Activated naive CD4-positive, alpha-beta T cell treated with anti-CD3 and anti-CD28 coated beads for 36 hours (primary cell): ENCODE measurements at regions of chr20 and their contacts with region 1.

Region 1: DNA sequence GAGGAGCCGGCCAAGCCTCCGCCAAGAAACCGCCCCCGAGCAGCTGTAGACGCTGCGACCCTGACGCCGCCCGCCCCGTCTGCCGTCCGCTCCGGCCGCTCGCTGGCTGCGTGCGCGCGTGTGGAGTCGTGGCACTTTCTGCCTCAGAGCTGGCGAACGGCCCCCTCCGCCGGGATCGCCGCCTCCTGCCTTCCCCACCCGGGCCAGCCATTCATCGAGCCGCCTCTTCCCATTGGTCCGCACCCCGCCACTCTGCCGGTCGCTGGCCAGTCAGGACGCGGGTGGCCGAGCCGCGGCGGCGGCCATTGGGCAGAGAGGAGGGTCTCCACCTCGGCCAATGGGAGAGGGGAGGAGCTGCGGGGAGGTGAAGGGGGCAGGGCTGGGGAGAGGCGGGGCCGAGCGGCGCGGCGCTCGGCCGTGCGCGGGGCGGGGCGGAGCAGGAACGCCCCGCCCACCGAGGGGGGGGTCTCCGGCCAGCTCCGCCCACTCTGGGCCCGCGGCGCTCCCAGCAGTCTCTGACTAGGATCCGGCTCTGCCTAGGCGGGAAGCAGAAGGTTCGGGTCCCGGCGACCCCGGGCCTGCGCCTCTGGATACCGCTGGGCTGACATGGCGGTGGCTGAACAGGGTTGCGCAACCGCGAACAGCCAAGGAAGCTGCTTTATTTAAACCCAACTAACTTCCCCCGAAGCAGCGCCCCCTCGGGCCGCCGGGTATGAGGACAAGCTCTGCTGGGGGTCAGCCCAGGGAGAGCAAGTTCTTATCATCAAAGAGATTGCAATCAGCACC is at the start of gene RRBP1:
- DNase-seq: peak; percentile 97
- H3K4me3 Mint-ChIP-seq: peak within 1 kb of the TSS; percentile 81
- H3K27ac Mint-ChIP-seq: peak within 1 kb of the TSS; percentile 47
- H3K4me1 Mint-ChIP-seq: peaks cover 15% of the 10 kb centered on the region
- H3K27me3 Mint-ChIP-seq: peaks cover 19% of the 10 kb centered on the region
- total RNA-seq, gene RRBP1: 19.6 to 20.0 TPM

Region 2: GRCh38 chr20:16729565-16730456 is 952.5 kb before region 1 on chr20 and contains the start of gene SNRPB2:
- CTCF ChIA-PET with region 1: no interaction called
- intact Hi-C with region 1: loop called (anchors 5 kb)
- DNase-seq: peak; percentile 95
- H3K4me3 Mint-ChIP-seq: peak within 1 kb of the TSS; percentile 99
- H3K27ac Mint-ChIP-seq: peak within 1 kb of the TSS; percentile 98
- H3K4me1 Mint-ChIP-seq: peaks cover 45% of the 10 kb centered on the region
- H3K27me3 Mint-ChIP-seq: peaks cover 6% of the 10 kb centered on the region
- total RNA-seq, gene SNRPB2: 93.1 to 99.8 TPM

Region 3: GRCh38 chr20:17611540-17612286 is 70.6 kb before region 1 on chr20:
- CTCF ChIA-PET with region 1: interaction called, 5 read pairs
- intact Hi-C with region 1: loop called (anchors 1 kb)
- DNase-seq: no peak
- H3K4me3 Mint-ChIP-seq: peak overlapping the region; percentile 38
- H3K27ac Mint-ChIP-seq: peak overlapping the region; percentile 82
- H3K4me1 Mint-ChIP-seq: peaks cover 34% of the 10 kb centered on the region
- H3K27me3 Mint-ChIP-seq: no peaks in the 10 kb centered on the region

Region 4: DNA sequence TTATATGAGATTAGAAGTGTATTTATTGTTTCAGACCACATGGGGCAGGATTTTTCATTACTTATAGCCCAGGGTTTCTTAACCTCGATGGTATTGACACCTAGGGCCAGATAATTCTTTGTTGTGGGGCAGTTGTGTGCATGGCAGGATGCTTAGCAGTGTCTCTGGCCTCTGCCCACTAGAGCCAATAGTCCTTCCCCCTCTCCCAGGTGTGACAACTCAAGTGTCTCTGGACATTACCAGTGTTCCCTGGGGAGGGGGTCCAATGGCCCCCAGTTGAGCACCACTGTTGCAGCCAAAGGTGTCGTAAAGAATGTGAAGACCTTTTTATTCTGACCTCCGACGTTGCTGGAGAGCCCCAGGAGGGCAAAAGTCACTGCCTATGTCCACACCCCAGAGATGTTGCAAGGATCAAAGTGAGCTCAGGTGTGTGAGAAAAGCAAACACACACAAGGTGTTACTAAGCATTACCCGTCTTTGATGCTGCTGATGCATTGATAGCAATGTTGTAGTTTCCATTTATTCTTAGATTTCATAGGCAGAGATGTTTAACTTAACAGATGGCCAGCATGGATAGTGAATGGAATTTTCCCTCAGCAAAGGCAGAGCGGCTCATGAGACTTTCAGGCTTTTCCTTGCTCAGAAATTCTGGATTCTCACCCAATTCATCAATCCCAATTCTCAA is 39.6 kb after region 1 on chr20:
- CTCF ChIA-PET with region 1: no interaction called
- intact Hi-C with region 1: no loop called
- DNase-seq: no peak
- H3K4me3 Mint-ChIP-seq: no peak overlapping the region
- H3K27ac Mint-ChIP-seq: no peak overlapping the region
- H3K4me1 Mint-ChIP-seq: no peaks in the 10 kb centered on the region
- H3K27me3 Mint-ChIP-seq: peaks cover 4% of the 10 kb centered on the region

Region 5: DNA sequence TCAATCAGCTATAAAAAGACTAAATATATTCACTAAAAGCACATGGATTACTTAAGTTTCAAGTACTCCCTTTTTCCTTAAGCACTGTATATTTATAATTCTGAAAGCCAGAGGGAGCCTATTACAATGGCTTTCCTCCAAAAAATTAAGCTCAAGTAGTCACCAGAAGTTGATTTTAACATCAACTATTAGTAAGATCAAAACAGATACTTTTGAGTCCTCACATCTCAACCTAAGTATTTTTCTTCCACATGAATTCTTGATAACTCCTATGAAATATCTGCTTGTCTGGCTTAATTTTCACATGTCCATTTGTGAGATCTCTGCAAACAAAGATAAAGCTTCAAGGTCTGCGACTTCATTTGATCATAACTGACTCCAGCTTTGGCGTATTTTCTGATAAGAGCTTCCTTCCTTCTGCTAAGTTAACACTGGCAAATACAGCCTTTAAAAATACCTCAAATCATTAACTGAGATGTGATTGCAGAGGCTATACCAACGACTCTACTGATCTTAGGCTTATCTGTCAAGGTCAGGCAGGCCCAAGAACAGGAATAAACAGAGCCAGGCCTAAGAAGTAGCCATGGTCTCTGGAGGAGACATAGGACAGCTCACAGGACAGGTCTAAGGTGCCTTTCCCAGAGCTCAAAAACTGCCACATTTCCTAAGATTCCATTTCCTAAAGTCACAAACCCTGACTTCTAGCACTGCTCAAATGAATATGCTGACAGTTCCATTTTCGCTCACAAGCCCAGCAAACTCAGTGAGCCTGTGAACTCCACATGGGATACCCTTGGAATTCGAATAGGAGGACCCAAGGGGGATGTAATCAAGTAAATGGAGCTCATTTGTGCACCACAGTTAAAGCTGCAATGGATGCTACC is 276.3 kb after region 1 on chr20:
- CTCF ChIA-PET with region 1: no interaction called
- intact Hi-C with region 1: no loop called
- DNase-seq: no peak
- H3K4me3 Mint-ChIP-seq: no peak overlapping the region
- H3K27ac Mint-ChIP-seq: peak overlapping the region; percentile 66
- H3K4me1 Mint-ChIP-seq: peaks cover 62% of the 10 kb centered on the region
- H3K27me3 Mint-ChIP-seq: no peaks in the 10 kb centered on the region

Region 6: GRCh38 chr20:17995967-17996819 is 313.9 kb after region 1 on chr20:
- CTCF ChIA-PET with region 1: interaction called, 6 read pairs
- intact Hi-C with region 1: loop called (anchors 1 kb)
- DNase-seq: peak; percentile 59
- H3K4me3 Mint-ChIP-seq: no peak overlapping the region
- H3K27ac Mint-ChIP-seq: no peak overlapping the region
- H3K4me1 Mint-ChIP-seq: peaks cover 21% of the 10 kb centered on the region
- H3K27me3 Mint-ChIP-seq: peaks cover 12% of the 10 kb centered on the region

Region 7: DNA sequence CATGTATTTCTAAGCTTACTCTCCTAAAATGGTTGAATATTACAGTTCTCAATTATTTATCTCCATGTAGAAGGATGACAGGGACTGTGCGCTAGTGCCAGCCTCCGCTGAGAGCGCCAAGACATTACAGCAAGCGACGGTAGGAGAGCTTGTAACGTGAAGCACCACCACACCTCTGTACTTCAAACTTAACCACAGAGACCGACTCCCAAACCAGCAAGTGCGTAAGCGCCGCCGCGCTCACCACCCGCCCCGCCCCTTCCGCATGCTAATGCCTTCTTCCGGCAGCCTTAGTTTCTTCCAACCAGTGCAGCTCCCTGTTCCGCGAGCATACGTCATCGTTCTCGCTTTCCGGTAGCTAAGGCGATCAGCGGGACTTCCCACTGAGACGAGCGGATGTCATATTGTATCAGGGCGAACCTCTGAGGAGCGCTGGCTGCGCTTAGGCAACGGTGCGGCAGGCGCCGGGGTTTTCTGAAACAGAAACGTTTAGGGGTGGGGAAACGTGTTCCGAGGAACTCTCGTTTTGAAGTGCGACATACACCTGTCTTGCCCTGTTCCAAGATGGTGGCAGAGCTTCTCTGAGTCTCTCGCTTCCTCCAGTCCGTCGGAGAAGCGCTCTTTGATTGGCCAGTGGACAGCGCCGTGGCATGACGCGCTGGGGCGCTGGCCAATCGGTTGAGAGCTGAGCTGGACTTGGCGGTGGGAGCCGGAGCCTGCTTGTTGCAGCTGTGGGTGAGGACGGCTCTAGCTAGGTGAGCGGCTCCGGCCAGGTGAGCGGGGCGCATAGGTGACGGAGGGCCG is 825.1 kb after region 1 on chr20 and contains the start of gene SEC23B:
- CTCF ChIA-PET with region 1: no interaction called
- intact Hi-C with region 1: loop called (anchors 1 kb)
- DNase-seq: peak; percentile 99
- H3K4me3 Mint-ChIP-seq: peak within 1 kb of the TSS; percentile 100
- H3K27ac Mint-ChIP-seq: peak within 1 kb of the TSS; percentile 100
- H3K4me1 Mint-ChIP-seq: peaks cover 45% of the 10 kb centered on the region
- H3K27me3 Mint-ChIP-seq: no peaks in the 10 kb centered on the region
- total RNA-seq, gene SEC23B: 66.9 to 69.2 TPM